SK-N-SH (cell line): ENCODE measurements at regions of chr5 and their contacts with region 1.

Region 1: GRCh38 chr5:14270209-14270702 is 127.1 kb downstream of the TRIO start:
- DNase-seq: peak; percentile 73
- H3K4me3 ChIP-seq: no peak overlapping the region; a peak in 1 of 4 replicates
- H3K27ac ChIP-seq: peak overlapping the region; percentile 72 to 96
- H3K4me1 ChIP-seq: peaks cover 46 to 49% of the 10 kb centered on the region in 2 experiments
- H3K27me3 ChIP-seq: no peaks in the 10 kb centered on the region
- CTCF ChIP-seq: peak; percentile 87
- EP300 ChIP-seq: 0 out of 4 replicates have a peak, but pooled peaks of 1 of the 2 experiments have one; percentile 20
- RAD21 ChIP-seq: peak; percentile 87

Region 2: DNA sequence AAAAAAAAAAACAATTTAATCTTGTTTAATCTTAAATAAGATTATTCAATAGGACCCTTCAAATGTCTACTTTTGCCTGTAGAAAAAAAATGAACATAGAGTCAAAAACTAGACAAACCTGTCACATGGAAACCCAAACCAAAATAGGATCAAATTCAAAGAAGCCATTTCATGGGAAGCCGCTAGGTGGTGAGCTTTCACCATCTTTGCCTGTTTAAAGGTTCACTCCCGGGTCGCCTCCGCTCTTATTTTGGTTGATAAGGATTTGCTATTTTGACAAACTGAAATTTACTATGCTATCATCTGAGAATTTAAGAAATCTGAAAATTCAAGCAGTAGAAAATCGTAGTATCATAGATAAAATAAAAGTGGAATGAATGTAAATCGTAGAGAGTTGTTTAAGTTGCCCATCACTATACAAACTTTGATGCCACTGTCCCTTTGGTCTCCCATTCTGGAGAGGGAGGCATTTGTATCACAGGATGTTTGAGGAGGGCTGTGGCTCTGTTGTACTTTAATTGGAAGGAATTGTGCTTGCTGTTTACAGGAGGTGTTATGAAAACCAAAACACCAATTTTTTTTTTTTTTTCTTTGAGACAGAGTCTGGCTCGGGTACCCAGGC is 282.3 kb before region 1 on chr5:
- CTCF ChIA-PET with region 1: interaction called, 21 read pairs
- POLR2A ChIA-PET with region 1: no interaction called
- DNase-seq: peak; percentile 73
- H3K4me3 ChIP-seq: peak overlapping the region in 1 of 2 experiments; percentile 5; a peak in 1 of 4 replicates
- H3K27ac ChIP-seq: no peak overlapping the region
- H3K4me1 ChIP-seq: peaks cover 0 to 2% of the 10 kb centered on the region in 2 experiments; a peak in 1 of 4 replicates
- H3K27me3 ChIP-seq: no peaks in the 10 kb centered on the region
- CTCF ChIP-seq: peak; percentile 95
- EP300 ChIP-seq: no peak
- RAD21 ChIP-seq: peak; percentile 97

Region 3: DNA sequence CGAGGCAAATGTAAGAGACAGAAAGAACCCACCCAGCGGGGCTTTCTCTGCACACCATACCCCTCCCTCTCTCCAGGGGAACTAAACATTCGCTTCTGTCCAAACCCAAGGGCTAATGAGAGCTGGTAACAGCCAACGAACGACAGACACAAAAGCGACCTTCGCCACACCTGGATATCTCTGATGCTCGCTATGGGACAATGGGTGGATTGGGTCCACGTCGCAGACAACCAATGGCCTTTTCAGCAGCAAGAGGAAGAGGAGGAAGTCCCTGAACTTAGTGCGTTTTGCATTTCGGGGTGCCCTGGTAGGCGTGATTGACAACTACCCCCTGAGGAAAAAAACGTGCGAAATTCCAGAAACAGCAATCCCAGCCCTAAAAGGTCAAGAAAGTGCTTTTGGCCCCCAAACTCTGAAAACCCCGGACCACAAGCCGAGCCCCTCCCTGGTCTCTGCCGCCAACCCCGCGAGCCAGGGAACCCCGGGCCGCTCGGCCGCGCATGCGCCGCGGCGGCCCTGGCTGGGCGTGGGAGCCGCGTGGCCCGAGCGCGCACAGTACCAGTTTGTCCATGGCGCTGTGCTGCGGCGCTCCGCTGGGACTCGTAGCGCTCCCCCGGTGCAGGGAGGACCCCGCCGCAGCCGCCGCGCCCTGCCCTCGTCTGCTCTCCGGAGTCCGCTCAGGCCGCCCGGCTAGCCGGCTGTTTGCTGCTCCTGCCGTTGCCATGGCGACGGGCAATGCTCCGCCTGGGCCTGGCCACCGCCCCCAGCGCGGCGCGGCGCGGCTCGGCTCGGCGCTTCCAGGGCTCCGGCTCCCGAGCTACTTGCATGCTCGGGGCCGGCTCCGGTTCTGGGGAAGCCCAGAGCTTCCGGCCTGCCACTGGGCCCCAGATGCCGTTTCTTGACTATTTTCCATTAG is 258.9 kb before region 1 on chr5:
- CTCF ChIA-PET with region 1: interaction called, 10 read pairs
- POLR2A ChIA-PET with region 1: no interaction called
- DNase-seq: peak; percentile 93
- H3K4me3 ChIP-seq: peak overlapping the region; percentile 57 to 62
- H3K27ac ChIP-seq: peak overlapping the region; percentile 79 to 80
- H3K4me1 ChIP-seq: no peaks in the 10 kb centered on the region; a peak in 2 of 4 replicates
- H3K27me3 ChIP-seq: no peaks in the 10 kb centered on the region
- CTCF ChIP-seq: 0 out of 2 replicates have a peak, but pooled peaks have one; percentile 10
- EP300 ChIP-seq: no peak
- RAD21 ChIP-seq: no peak

Region 4: DNA sequence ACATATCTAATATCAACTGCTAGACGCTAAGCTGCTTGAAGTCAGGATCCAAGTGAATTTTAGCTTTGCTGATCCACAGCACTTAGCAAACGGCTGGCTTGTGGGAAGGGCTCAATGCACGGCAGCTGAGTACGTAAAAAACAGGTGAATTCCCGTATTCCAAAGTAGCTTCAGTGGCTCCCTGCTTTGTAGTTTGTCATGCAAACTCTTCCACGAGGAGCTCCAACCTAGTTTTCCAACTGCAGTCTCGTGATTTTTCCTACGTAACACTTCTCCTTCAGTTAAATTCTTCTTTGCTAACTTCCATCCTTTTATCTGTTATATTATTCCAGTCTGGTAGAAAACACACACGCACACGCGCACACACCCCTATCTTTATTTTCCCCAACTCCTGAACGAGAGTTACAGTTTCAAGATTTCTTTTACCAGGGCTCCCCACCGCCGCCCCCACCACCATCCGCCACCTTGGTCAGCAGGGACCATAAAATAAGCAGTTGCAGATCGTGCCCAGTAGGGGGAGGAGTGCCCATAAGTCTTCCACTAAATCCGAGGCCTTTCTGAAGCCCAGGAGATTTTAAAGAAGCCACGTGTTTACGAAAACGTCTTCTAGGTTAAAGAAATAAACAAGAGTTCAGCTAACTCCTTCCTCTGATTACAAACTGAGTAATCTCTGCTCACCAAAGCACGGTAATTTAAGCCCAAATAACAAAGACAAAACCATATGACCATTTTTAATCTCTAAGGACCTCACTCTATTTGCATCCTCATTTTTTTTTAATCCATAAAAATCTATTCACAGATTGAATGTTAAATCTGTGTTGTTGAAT is 161.9 kb before region 1 on chr5:
- CTCF ChIA-PET with region 1: interaction called, 52 read pairs
- POLR2A ChIA-PET with region 1: no interaction called
- DNase-seq: peak; percentile 72
- H3K4me3 ChIP-seq: no peak overlapping the region; a peak in 1 of 4 replicates
- H3K27ac ChIP-seq: peak overlapping the region in 1 of 2 experiments; percentile 11; a peak in 1 of 4 replicates
- H3K4me1 ChIP-seq: peaks cover 0 to 28% of the 10 kb centered on the region in 2 experiments; a peak in 1 of 4 replicates
- H3K27me3 ChIP-seq: no peaks in the 10 kb centered on the region
- CTCF ChIP-seq: peak; percentile 63
- EP300 ChIP-seq: no peak
- RAD21 ChIP-seq: peak; percentile 84

Region 5: DNA sequence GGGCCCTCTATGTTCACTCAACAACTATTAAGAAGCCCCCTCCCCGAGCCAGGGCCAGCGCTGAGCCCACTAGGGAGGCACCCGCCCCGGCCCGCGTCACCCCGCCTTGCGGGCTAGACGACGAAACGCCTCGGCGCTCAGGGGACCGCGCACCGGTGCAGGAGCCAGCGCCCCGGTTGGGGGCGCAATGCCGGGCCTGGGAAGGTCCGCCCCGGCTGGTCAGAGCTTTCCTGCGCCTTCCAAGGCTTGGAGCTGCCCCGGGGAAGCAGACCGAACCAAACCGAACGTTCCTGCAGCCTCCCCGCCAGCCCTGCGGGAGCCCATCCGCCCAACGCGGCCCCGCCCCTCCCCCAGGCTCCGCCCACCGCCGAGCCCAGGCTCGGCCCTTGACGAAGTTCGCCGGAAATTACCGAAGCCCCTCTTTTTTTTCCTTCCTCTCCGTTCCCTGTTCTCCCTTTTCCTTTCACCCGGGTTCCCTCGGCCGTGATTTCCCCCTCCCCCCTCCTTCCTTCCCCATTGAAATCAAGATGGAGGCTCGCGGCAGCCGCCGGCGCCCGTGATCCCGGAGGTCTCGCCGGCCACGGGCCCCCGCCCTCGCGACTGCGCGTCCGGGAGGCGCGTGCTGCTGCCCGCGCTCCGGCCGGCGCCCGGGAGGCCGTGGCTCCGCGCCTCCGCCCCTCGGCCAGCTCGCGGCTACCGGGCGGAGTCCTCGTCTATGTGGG is 127.3 kb before region 1 on chr5 and contains the start of gene TRIO:
- CTCF ChIA-PET with region 1: interaction called, 17 read pairs
- POLR2A ChIA-PET with region 1: interaction called, 3 read pairs
- DNase-seq: peak; percentile 97
- H3K4me3 ChIP-seq: peak within 1 kb of the TSS; percentile 94 to 95
- H3K27ac ChIP-seq: peak within 1 kb of the TSS; percentile 87 to 93
- H3K4me1 ChIP-seq: peaks cover 23 to 24% of the 10 kb centered on the region in 2 experiments; a peak in 3 of 4 replicates
- H3K27me3 ChIP-seq: no peaks in the 10 kb centered on the region
- CTCF ChIP-seq: peak; percentile 56
- EP300 ChIP-seq: peak in 1 of 2 experiments; percentile 40; a peak in 1 of 4 replicates
- RAD21 ChIP-seq: peak; percentile 24
- polyA plus RNA-seq, gene TRIO: 225 and 229 TPM in 2 replicates

Region 6: DNA sequence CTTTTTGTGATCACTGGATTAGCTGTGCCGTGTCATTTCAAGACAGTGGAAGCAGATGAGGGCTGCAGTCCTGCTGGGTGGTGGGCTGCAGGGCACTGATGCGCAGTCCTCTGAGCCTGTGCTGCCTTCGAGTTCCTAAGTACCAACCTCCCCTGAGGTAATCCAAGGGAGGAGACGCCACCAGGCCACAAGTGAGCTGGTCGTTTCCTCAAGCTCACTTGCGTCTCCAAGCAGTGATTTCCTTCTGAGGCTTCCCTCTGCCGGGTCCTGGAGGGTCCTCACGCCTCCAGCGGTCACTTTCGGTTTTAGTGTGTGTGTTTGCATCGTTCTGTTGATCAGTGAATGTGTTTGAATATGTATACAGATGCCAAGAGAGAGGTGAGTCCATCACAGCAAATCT is 11.4 kb before region 1 on chr5:
- CTCF ChIA-PET with region 1: interaction called, 10 read pairs
- POLR2A ChIA-PET with region 1: no interaction called
- DNase-seq: no peak
- H3K4me3 ChIP-seq: no peak overlapping the region
- H3K27ac ChIP-seq: no peak overlapping the region; a peak in 1 of 4 replicates
- H3K4me1 ChIP-seq: peaks cover 35 to 47% of the 10 kb centered on the region in 2 experiments; a peak in 3 of 4 replicates
- H3K27me3 ChIP-seq: no peaks in the 10 kb centered on the region
- CTCF ChIP-seq: no peak
- EP300 ChIP-seq: no peak
- RAD21 ChIP-seq: no peak

Region 7: GRCh38 chr5:14286574-14287421 is 16.5 kb after region 1 on chr5:
- CTCF ChIA-PET with region 1: interaction called, 39 read pairs
- POLR2A ChIA-PET with region 1: no interaction called
- DNase-seq: no peak
- H3K4me3 ChIP-seq: no peak overlapping the region
- H3K27ac ChIP-seq: no peak overlapping the region
- H3K4me1 ChIP-seq: peaks cover 0 to 4% of the 10 kb centered on the region in 2 experiments; a peak in 2 of 4 replicates
- H3K27me3 ChIP-seq: no peaks in the 10 kb centered on the region
- CTCF ChIP-seq: no peak
- EP300 ChIP-seq: no peak
- RAD21 ChIP-seq: no peak

Region 8: GRCh38 chr5:14659821-14660607 is 389.8 kb after region 1 on chr5:
- CTCF ChIA-PET with region 1: no interaction called
- POLR2A ChIA-PET with region 1: no interaction called
- DNase-seq: no peak
- H3K4me3 ChIP-seq: no peak overlapping the region
- H3K27ac ChIP-seq: no peak overlapping the region
- H3K4me1 ChIP-seq: peaks cover 7 to 10% of the 10 kb centered on the region in 2 experiments; a peak in 3 of 4 replicates
- H3K27me3 ChIP-seq: no peaks in the 10 kb centered on the region
- CTCF ChIP-seq: no peak
- EP300 ChIP-seq: no peak
- RAD21 ChIP-seq: no peak